ENCODE measurements at regions of chr1 and their contacts with region 1.

Region 1: DNA sequence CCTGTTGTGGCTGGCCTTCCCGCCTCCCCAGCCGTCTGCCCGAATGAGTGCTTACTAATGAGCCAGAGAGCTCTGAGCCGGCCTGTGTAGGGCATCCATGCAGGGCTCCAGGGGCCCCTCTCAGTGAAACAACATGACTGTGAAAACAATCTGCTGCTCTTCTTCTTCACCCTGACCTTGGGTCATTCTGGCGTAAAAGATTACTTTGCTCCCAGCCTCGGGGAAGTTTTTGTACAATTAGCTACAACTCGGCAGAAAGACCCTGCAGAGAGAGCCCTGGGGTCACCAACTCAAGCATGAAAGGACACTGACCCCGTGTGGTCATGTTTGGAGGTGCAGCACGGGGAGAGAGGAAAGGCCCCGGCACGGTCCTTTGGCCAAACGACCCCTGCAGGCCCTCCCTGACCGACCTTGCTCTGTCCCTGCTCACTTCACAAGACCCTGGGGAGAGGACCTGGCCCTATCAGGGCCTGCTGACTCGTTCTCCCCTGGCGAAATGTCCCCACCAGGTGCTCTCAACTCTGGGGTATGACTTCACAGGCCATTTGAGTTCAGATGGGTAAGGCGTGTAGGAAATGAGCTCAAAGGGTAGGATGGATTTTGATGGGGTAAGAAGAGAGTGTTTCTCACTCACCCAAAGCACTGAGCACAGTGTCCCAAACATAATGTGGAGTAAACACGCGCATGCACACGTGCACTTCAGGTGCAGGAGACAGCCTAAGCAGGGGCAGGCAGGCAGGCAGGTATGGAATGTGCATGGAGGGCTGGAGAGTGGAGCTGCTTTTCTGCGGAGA is 22.9 kb upstream of the FAM20B start:
- DNase-seq: peak; percentile 69
- H3K4me3 Mint-ChIP-seq: no peak overlapping the region
- H3K27ac Mint-ChIP-seq: peak overlapping the region; percentile 48
- H3K4me1 Mint-ChIP-seq: peaks cover 15% of the 10 kb centered on the region
- H3K27me3 Mint-ChIP-seq: no peaks in the 10 kb centered on the region

Region 2: DNA sequence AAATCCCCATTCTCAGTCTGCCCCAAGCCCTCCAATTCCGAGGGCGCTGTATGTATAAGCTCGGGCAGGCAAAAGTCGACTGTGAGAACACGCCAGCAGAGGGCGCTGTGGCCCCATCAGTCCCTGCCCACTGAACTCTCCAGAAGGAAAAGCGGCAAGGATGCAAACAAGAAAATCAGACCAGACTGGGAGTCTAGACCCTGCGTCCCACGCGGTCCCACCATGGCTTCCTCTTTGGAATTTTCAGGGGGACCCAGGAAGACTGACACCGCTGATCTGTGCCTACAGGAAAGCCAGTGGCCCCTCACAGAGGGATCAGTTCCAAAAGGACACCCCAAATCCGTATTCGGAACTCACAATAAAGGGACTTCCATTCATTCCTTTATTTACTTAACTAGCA is 470.4 kb before region 1 on chr1:
- CTCF ChIA-PET with region 1: interaction called, 15 read pairs
- POLR2A ChIA-PET with region 1: no interaction called
- DNase-seq: peak; percentile 74
- H3K4me3 Mint-ChIP-seq: no peak overlapping the region
- H3K27ac Mint-ChIP-seq: no peak overlapping the region
- H3K4me1 Mint-ChIP-seq: peaks cover 1% of the 10 kb centered on the region
- H3K27me3 Mint-ChIP-seq: no peaks in the 10 kb centered on the region

Region 3: GRCh38 chr1:179061360-179062282 is 58.9 kb after region 1 on chr1:
- CTCF ChIA-PET with region 1: no interaction called
- POLR2A ChIA-PET with region 1: no interaction called
- DNase-seq: no peak
- H3K4me3 Mint-ChIP-seq: no peak overlapping the region
- H3K27ac Mint-ChIP-seq: no peak overlapping the region
- H3K4me1 Mint-ChIP-seq: no peaks in the 10 kb centered on the region
- H3K27me3 Mint-ChIP-seq: no peaks in the 10 kb centered on the region

Measured in activated CD4-positive, alpha-beta T cell treated with anti-CD3 and anti-CD28 coated beads, Interleukin-2, amount 10 ng/mL, durations not matched to agents 7 days and 5 days (primary cell).